ENCODE measurements at regions of chr18 and their contacts with region 1.

Region 1: GRCh38 chr18:36809590-36810381 is 19.0 kb downstream of the TPGS2 start:
- DNase-seq: peak; percentile 92

Region 2: GRCh38 chr18:36688020-36688965 is 121.5 kb before region 1 on chr18:
- CTCF ChIA-PET with region 1: interaction called, 15 read pairs
- POLR2A ChIA-PET with region 1: no interaction called
- DNase-seq: peak; percentile 89

Region 3: DNA sequence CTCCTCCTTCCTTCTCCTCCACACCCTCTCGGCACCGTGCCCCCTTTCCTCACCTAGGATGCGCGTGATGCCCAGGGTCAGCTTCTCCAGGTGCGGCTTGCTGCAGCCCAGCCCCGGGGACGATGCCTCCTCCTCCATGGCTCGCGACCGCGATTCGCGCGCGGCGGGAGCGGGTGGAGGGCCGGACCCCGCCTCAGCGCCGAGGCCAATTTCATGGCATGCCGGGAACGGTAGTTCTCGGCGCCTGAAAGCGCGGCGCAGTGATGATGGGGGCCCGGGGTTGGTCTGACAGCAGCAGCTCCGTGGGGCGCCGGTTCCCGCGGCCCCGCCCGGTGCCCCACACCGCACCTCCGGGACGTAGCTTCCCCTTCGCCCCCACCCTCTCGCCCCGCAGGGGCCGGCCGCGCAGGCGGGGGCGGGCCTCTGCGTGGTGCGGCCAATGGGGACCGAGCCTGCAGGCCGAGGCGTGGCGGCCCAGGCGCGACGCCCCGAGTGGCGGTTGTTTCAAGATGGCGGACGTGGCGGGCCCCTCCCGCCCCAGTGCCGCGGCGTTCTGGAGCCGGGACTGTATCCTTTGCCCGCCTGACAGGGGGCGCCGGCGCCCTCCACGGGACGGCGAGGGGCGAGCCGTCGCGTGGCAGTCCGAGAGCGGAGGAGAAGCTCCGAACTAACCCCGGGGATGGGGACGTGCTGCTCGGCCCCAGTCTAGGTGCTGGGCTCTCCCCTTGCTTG is 19.0 kb after region 1 on chr18 and contains the starts of genes KIAA1328 and TPGS2:
- CTCF ChIA-PET with region 1: interaction called, 10 read pairs
- POLR2A ChIA-PET with region 1: interaction called, 7 read pairs
- DNase-seq: peak; percentile 97

Region 4: GRCh38 chr18:36856815-36857214 is 47.0 kb after region 1 on chr18:
- CTCF ChIA-PET with region 1: no interaction called
- POLR2A ChIA-PET with region 1: no interaction called
- DNase-seq: no peak